Activated CD4-positive, alpha-beta memory T cell treated with anti-CD3 and anti-CD28 coated beads for 36 hours (primary cell): ENCODE measurements at regions of chr5 and their contacts with region 1.

Region 1: DNA sequence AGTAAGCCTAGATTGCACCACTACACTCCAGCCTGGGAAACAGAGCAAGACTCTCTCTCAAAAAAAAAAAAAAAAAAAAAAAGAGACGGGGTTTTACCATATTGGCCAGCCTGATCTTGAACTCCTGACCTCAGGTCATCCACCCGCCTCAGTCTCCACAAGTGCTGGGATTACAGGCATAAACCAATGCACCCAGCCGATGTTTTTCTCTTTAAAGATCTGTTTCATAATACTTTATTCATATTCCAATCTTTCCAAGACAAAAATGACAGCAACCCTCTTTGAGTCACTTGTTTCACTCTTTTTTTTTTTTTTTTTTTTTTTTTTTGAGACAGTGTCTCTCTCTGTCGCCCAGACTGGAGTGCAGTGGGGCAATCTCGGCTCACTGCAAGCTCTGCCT is 13.6 kb upstream of the LMNB1 start:
- DNase-seq: peak; percentile 39
- H3K4me3 Mint-ChIP-seq: no peak overlapping the region
- H3K27ac Mint-ChIP-seq: peak overlapping the region; percentile 28
- H3K4me1 Mint-ChIP-seq: peaks cover 39% of the 10 kb centered on the region
- H3K27me3 Mint-ChIP-seq: no peaks in the 10 kb centered on the region

Region 2: DNA sequence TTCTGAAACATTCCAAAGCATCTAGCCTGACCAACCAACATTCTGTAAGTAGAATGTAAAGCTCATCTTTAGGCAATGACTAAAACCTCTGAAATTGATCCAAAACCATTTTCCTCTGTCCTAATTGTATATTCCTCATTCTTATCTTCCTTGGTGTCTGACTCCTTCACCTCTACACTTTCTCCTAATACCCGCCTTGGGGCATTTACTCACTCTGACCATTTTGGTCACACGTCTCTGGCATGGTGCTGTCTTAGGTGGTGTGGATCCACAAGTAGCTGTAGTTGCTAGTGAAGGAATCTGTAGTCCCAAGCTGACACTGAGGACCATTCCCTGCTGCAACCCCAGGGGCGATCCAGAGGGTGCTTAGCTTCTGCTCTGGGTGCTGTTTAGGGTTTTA is 27.2 kb before region 1 on chr5:
- CTCF ChIA-PET with region 1: no interaction called
- POLR2A ChIA-PET with region 1: no interaction called
- intact Hi-C with region 1: loop called (anchors 2 kb)
- DNase-seq: no peak
- H3K4me3 Mint-ChIP-seq: no peak overlapping the region
- H3K27ac Mint-ChIP-seq: no peak overlapping the region
- H3K4me1 Mint-ChIP-seq: peaks cover 4% of the 10 kb centered on the region
- H3K27me3 Mint-ChIP-seq: no peaks in the 10 kb centered on the region